A673 (cell line): ENCODE measurements at regions of chr5 and their contacts with region 1.

Region 1: GRCh38 chr5:64653766-64654560 is 36.3 kb upstream of the SHISAL2B start:
- DNase-seq: no peak
- H3K4me3 ChIP-seq: no peak overlapping the region
- H3K27ac ChIP-seq: no peak overlapping the region
- H3K4me1 ChIP-seq: peaks cover 4% of the 10 kb centered on the region
- H3K27me3 ChIP-seq: no peaks in the 10 kb centered on the region
- CTCF ChIP-seq: no peak

Region 2: GRCh38 chr5:64040490-64040889 is 613.5 kb before region 1 on chr5:
- CTCF ChIA-PET with region 1: interaction called, 12 read pairs
- POLR2A ChIA-PET with region 1: no interaction called
- intact Hi-C with region 1: no loop called
- DNase-seq: no peak
- H3K4me3 ChIP-seq: no peak overlapping the region
- H3K27ac ChIP-seq: no peak overlapping the region
- H3K4me1 ChIP-seq: no peaks in the 10 kb centered on the region
- H3K27me3 ChIP-seq: no peaks in the 10 kb centered on the region
- CTCF ChIP-seq: peak; percentile 12; the same call in 1 of the 2 replicates

Region 3: DNA sequence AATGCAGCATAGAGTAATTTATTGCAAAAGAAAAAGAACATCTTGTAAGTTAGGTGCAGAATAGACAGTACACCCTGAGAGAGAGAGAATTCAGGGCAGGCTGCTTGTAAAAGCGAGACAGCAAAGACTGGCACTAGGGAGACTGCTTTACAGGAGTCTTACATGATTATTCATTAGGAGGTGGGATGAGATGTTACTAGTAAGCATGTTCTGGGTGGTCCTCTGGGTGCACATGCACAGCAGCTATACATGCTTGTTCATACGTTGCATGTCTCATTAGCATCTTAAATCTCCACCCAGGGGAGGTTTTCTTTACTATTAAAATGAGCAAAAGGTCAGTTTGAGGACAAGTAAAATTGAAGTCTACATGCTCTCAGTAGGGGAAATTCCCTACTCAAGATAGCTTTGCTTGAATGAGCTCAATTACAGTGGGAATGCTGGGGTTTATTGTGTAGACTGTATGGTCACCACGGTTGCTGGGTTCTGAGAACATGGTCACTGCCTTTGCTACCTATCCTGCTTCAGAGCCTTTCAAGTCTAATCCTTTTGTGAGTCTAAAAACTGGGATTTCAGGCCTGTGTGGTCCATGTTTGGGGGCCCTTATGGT is 87.5 kb before region 1 on chr5:
- CTCF ChIA-PET with region 1: no interaction called
- POLR2A ChIA-PET with region 1: no interaction called
- intact Hi-C with region 1: no loop called
- DNase-seq: no peak
- H3K4me3 ChIP-seq: no peak overlapping the region
- H3K27ac ChIP-seq: no peak overlapping the region
- H3K4me1 ChIP-seq: no peaks in the 10 kb centered on the region
- H3K27me3 ChIP-seq: peaks cover 5% of the 10 kb centered on the region
- CTCF ChIP-seq: no peak

Region 4: DNA sequence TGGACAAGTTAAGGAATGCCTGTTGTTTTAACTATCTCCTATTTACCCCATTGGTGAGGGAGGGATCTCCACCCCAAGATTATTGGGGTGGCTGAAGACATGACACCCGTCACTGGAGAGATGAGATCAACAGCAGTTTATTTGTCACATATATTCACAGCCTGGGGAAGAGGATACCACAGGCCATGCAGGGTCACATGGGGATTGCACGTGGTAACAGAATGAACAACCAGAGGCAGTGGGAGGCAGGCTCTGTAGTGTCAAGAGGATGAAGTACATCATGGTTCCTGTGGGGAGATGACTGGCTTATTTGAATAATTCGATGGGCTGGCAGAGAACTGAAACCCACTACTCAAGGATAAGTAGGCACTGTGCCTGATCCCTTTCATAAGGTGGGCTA is 17.7 kb after region 1 on chr5:
- CTCF ChIA-PET with region 1: no interaction called
- POLR2A ChIA-PET with region 1: interaction called, 10 read pairs
- intact Hi-C with region 1: no loop called
- DNase-seq: no peak
- H3K4me3 ChIP-seq: no peak overlapping the region
- H3K27ac ChIP-seq: no peak overlapping the region
- H3K4me1 ChIP-seq: no peaks in the 10 kb centered on the region
- H3K27me3 ChIP-seq: no peaks in the 10 kb centered on the region
- CTCF ChIP-seq: no peak

Region 5: GRCh38 chr5:64869419-64869818 is 215.5 kb after region 1 on chr5:
- CTCF ChIA-PET with region 1: no interaction called
- POLR2A ChIA-PET with region 1: no interaction called
- intact Hi-C with region 1: no loop called
- DNase-seq: peak; percentile 58
- H3K4me3 ChIP-seq: no peak overlapping the region
- H3K27ac ChIP-seq: no peak overlapping the region
- H3K4me1 ChIP-seq: peaks cover 9% of the 10 kb centered on the region
- H3K27me3 ChIP-seq: no peaks in the 10 kb centered on the region
- CTCF ChIP-seq: no peak